Sigmoid colon (tissue), 7 donors: ENCODE measurements at regions of chr19 and their contacts with region 1.

Region 1: DNA sequence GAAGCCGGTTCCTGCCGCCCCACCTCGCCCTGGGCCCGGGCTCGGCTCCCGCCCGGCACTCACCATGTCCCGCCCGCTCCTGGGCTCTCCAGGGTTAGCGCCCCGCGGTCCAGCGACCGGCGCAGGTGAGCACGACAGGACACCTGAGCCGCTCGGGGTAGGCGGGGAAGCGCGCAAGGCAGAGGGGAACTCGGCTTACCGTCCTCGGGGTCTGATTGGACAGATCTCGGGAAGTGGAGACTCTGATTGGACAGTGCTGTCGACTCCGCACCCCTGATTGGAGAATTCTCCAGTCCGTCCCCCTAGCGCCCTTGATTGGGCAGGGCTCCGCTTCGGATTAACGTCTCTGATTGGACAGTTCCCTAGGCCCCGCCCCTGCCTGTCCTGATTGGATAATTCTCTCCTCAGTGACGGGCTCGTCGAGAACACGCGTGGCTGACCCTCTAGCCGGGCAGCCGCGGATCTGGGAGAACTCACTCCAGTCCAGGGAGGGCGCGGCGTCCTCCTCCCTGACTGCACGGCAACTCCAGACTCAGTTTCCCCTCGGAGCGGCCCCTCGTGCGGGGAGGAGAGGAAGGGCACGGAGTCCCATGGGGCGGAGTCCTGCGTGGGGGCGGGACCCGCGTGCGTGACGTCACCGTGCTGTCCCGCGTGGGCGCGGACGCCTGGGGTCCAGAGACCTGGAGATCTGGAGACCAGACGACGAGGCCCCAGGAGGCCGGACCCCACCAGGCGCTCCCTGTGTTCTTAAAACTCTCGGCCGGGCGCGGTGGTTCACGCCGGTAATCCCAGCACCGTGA is at the start of gene ZNF77:
- DNase-seq: peak; percentile 100
- H3K4me3 ChIP-seq: peak within 1 kb of the TSS; percentile 58 to 99 (median 86)
- H3K27ac ChIP-seq: peak within 1 kb of the TSS; percentile 86 to 98 (median 96)
- H3K4me1 ChIP-seq: peaks cover 0 to 29% (median 22%) of the 10 kb centered on the region in 4 donors
- H3K27me3 ChIP-seq: no peaks in the 10 kb centered on the region
- CTCF ChIP-seq: no peak
- EP300 ChIP-seq: no peak
- POLR2A ChIP-seq: peak in 1 of 2 donors; percentile 21
- total RNA-seq, gene ZNF77: 3.4 to 8.2 (median 5.3) TPM

Region 2: DNA sequence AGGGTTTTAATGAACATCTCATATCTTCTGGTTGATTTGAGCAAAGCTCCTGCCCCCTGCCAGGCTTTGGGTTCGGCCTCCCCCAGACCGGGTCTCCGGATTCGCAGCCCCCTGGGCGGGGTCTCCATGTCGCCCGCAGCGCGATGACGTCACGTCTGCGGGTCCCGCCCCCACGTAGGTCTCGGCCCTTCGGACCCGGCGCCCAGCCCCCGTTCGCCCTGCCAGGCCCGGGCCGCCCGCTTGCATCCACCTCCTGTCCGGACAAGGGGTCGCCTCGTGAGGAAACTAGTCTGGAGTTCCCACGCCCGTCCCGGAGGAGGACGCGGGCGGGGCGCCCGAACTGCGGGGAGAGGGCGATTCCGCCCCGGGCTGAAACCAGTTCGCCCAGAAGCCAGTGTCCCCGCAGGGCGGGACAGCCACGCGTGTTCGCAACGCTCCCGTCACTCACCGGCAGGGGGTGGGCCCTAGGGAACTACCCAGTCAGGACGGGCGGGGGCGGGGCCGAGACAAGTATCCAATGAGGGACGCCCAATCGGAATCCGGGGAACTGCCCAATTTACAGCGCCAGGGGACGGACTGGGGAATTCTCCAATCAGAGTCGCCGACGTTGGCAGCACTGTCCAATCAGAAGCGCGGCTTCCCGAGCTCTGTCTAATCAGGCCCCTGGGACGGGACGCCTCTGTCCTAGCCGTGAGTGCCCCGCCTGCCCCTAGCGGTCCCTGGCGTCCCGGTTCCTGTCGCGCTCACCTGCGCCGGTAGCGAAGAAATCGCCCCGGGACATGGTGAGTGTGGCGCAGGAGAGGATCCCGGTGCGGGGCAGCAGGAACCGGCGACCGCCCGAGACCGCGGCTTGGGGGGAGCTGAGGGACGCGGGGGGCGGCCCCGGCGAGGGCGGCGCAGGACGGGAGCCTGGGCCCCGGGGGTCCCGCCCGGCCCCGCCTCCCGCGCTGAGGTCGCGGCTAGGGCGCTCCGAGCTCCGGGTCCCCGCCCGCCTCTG is 103.9 kb before region 1 on chr19 and contains the start of gene ZNF555:
- intact Hi-C with region 1: loop called (anchors 5 kb)
- DNase-seq: peak; percentile 100
- H3K4me3 ChIP-seq: peak within 1 kb of the TSS; percentile 69 to 97 (median 96)
- H3K27ac ChIP-seq: peak within 1 kb of the TSS; percentile 84 to 98 (median 94)
- H3K4me1 ChIP-seq: peaks cover 0 to 17% (median 15%) of the 10 kb centered on the region in 4 donors
- H3K27me3 ChIP-seq: no peaks in the 10 kb centered on the region
- CTCF ChIP-seq: peak; percentile 30 to 40 (median 36)
- EP300 ChIP-seq: peak in 1 of 4 donors; percentile 22
- POLR2A ChIP-seq: peak in 1 of 2 donors; percentile 10
- total RNA-seq, gene ZNF555: 4.3 to 10.3 (median 6.3) TPM

Region 3: GRCh38 chr19:2900296-2901252 is 44.4 kb before region 1 on chr19 and contains the start of gene ZNF57:
- intact Hi-C with region 1: loop called (anchors 5 kb)
- DNase-seq: peak; percentile 100
- H3K4me3 ChIP-seq: peak within 1 kb of the TSS; percentile 61 to 83 (median 67)
- H3K27ac ChIP-seq: peak within 1 kb of the TSS; percentile 81 to 92 (median 86)
- H3K4me1 ChIP-seq: peaks cover 0 to 14% (median 9%) of the 10 kb centered on the region in 4 donors
- H3K27me3 ChIP-seq: no peaks in the 10 kb centered on the region
- CTCF ChIP-seq: no peak
- EP300 ChIP-seq: no peak
- POLR2A ChIP-seq: peak; percentile 37 to 42
- total RNA-seq, gene ZNF57: 1.4 to 6.1 (median 1.9) TPM

Region 4: DNA sequence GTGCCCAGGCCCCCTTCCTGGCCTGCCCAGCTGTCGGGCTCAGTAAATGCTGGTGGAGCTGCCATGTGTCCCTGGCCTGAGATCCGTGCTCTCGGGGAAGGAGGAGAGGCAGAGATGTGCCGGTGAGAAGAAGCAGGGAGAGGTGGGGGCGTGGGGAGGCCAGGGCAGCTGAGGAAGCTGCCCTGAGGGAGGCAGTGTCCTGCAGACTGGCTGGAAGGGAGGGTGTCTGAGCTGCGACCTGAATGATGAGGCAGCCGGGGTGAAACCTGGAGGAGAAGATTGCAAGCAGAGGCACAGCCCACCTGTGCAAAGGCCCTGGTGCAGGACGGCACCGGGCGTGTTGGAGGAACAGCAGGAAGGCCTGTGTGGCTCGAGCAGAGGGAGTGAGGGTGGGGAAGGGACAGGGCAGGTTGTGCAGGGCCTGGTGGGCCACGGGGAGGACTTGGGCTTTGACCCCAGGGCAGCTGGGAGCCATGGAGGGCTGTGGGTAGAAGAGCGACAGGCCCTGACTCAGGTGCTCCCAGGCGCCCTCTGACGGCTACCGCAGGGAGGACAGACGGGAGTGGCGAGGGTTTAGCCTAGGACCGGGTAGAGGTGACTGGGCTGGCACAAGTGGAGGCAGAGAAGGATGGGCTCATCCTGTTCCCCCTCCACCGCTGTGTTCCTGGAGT is 265.5 kb after region 1 on chr19:
- intact Hi-C with region 1: no loop called
- DNase-seq: no peak
- H3K4me3 ChIP-seq: no peak overlapping the region
- H3K27ac ChIP-seq: no peak overlapping the region
- H3K4me1 ChIP-seq: no peaks in the 10 kb centered on the region
- H3K27me3 ChIP-seq: no peaks in the 10 kb centered on the region
- CTCF ChIP-seq: peak in 3 of 4 experiments; percentile 20 to 47 (median 23)
- EP300 ChIP-seq: no peak
- POLR2A ChIP-seq: no peak